Mammary epithelial cell (primary cell): ENCODE measurements at regions of chr5 and their contacts with region 1.

Region 1: DNA sequence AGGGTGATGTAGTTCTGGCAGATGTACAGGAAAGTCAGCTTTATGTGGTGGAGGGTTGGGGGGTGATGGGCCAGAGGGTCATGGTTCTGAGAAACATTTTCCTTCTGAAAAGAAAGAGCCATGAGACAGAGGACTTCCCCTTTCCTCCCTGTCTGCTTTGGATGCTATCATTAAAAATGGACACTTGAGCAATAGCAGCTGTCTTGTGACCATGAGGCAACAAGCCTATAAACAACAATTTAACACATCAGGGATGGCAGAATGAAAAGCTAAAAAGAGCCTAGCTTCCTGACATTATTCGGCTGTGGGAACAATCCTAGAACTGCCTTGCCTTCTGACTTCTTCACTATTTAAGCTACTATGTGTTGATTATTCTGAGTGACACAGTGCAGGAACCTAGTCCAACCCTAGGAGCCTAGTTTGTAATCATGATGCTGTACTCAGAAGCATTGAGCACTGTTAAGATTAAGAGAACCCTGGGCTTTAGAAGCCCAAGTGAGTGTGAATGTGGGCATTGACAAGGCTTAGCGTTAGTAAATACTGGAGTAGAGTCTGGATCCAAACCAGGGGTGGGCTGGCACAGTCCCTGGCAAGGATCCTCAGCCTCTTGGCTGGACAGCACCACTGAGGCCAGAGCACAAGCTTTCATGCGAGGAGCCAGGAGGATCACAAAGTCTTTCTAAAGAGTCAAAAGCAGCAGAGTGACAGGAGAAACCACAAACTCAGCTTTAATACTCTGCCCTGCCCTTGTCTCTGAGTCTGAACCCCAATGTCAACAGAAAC is 178.5 kb upstream of the EGFLAM start:
- DNase-seq: no peak
- H3K4me3 ChIP-seq: no peak overlapping the region
- H3K27ac ChIP-seq: no peak overlapping the region
- H3K4me1 ChIP-seq: no peaks in the 10 kb centered on the region
- H3K27me3 ChIP-seq: peaks cover 4% of the 10 kb centered on the region
- CTCF ChIP-seq: no peak

Region 2: DNA sequence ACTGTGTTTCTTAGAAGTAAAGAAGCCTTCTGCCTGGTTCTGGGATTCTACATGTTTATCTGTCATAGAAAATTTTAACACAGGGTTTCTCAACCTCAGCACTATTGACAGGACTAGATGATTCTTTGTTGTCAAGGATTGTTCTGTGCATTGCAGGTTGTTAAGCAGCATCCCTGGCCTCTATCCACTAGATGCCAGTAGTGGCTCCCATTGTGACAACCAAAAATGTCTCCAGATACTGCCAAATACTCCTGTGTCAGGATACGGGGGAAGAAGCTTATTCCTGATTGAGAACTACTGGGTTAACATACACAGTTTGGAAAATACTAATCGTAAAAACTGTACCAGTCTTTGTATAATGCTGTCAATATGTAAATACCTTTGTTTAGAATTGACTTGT is 1036.1 kb before region 1 on chr5:
- CTCF ChIA-PET with region 1: no interaction called
- dilution Hi-C with region 1: no loop called
- in situ Hi-C with region 1: no loop called
- intact Hi-C with region 1: no loop called
- DNase-seq: no peak
- H3K4me3 ChIP-seq: no peak overlapping the region
- H3K27ac ChIP-seq: no peak overlapping the region
- H3K4me1 ChIP-seq: no peaks in the 10 kb centered on the region
- H3K27me3 ChIP-seq: no peaks in the 10 kb centered on the region
- CTCF ChIP-seq: peak in 1 of 2 donors; percentile 20

Region 3: GRCh38 chr5:38060354-38060753 is 19.5 kb before region 1 on chr5:
- CTCF ChIA-PET with region 1: no interaction called
- dilution Hi-C with region 1: no loop called
- in situ Hi-C with region 1: no loop called
- intact Hi-C with region 1: loop called (anchors 1 kb)
- DNase-seq: no peak
- H3K4me3 ChIP-seq: no peak overlapping the region
- H3K27ac ChIP-seq: no peak overlapping the region
- H3K4me1 ChIP-seq: no peaks in the 10 kb centered on the region
- H3K27me3 ChIP-seq: no peaks in the 10 kb centered on the region
- CTCF ChIP-seq: no peak

Region 4: DNA sequence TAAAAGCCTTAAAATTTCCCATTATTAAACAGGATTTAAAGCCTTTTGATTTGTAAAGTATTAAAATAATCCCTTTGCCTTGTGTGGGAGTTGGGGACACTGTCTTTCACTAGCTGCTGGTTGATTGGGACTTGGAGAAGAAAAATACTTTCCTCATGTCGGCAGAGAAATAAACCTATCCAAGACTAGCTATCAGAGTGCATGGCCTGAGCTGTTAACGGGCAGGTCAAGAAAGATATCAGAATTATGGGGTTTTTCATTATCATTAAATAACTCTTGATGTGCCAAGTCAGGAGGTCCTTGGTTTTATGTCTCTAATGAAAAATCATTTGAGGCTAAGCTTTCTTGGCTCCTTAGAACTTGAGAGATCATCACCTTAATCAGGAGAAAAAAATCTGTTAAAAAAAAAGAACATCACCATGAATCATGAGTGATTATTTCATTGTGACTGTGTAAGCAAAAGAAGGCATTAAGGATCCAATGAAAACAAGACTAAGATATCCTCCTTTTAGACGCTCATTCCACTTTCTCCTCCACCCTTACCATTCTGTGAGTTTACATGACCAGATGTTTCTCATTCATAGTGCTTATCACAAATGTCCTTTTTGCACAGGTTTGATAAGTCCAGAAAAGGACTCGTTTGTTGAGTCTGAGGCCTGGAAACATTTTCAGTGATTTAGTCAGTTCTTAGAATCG is 38.1 kb after region 1 on chr5:
- CTCF ChIA-PET with region 1: no interaction called
- dilution Hi-C with region 1: loop called (anchors 5 kb)
- in situ Hi-C with region 1: no loop called
- intact Hi-C with region 1: no loop called
- DNase-seq: no peak
- H3K4me3 ChIP-seq: no peak overlapping the region
- H3K27ac ChIP-seq: no peak overlapping the region
- H3K4me1 ChIP-seq: no peaks in the 10 kb centered on the region
- H3K27me3 ChIP-seq: no peaks in the 10 kb centered on the region
- CTCF ChIP-seq: no peak

Region 5: DNA sequence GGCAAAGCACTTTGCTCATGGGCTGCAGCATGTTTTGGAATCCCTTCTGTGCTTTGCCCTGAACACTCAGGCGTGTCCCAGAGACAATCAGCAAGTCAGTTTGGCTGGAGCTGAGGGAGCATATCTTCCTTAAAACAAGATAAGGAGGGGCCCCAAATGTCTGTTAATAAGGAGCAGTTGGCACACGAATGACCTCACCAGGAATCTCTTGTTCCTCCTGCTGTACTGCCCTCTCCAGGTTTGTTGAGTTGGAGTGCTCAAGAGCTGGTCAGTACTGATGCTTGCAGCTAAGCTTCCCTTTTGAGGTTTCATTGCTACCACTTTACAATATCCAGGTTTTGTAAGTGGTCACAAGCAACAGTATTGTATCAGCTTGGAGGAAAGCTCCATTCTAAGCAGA is 77.2 kb after region 1 on chr5:
- CTCF ChIA-PET with region 1: no interaction called
- dilution Hi-C with region 1: no loop called
- in situ Hi-C with region 1: no loop called
- intact Hi-C with region 1: no loop called
- DNase-seq: no peak
- H3K4me3 ChIP-seq: no peak overlapping the region
- H3K27ac ChIP-seq: no peak overlapping the region
- H3K4me1 ChIP-seq: no peaks in the 10 kb centered on the region
- H3K27me3 ChIP-seq: peaks cover 1% of the 10 kb centered on the region
- CTCF ChIP-seq: peak in 1 of 2 donors; percentile 8